IMR-90 (cell line): ENCODE measurements at regions of chr5 and their contacts with region 1.

Region 1: DNA sequence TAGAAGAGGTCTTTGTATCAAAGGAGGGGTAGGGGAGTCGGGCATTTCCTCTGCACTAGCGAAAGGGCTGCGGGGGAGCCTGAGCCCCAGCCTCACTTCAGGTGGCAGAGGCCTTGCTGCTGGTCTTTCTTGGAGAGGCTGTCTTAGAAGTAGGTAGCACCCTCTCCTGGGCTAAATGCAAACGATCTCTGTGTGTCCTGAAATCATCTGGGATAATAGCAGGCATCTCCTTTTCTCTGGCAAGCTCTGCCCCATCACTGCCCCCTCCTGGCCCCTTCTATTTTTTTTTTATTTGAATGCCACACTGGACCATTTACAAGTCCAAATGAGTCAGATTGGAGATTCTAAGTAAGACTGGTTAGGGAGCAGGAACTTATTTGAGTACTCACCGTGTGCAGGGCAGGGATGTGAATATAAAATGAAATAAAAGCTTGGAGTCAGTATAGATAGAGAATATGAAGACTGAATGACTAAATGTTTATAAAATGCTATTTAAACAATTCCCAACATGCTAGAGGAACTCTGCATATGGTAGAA is 137.1 kb downstream of the FGF1 start:
- DNase-seq: peak; percentile 97
- ATAC-seq: peak; percentile 92
- H3K4me3 ChIP-seq: no peak overlapping the region
- H3K27ac ChIP-seq: no peak overlapping the region
- H3K4me1 ChIP-seq: peaks cover 17% of the 10 kb centered on the region
- H3K27me3 ChIP-seq: no peaks in the 10 kb centered on the region
- CTCF ChIP-seq: peak; percentile 99
- POLR2A ChIP-seq: 0 out of 2 replicates have a peak, but pooled peaks have one; percentile 40
- RAD21 ChIP-seq: peak; percentile 99

Region 2: GRCh38 chr5:142012792-142013388 is 535.9 kb before region 1 on chr5 and contains the start of gene GNPDA1:
- CTCF ChIA-PET with region 1: no interaction called
- POLR2A ChIA-PET with region 1: no interaction called
- dilution Hi-C with region 1: no loop called
- in situ Hi-C with region 1: no loop called
- intact Hi-C with region 1: loop called (anchors 5 kb)
- DNase-seq: peak; percentile 72
- ATAC-seq: peak; percentile 88
- H3K4me3 ChIP-seq: peak within 1 kb of the TSS; percentile 69
- H3K27ac ChIP-seq: peak within 1 kb of the TSS; percentile 73
- H3K4me1 ChIP-seq: peaks cover 10% of the 10 kb centered on the region
- H3K27me3 ChIP-seq: no peaks in the 10 kb centered on the region
- CTCF ChIP-seq: 0 out of 2 replicates have a peak, but pooled peaks have one; percentile 15
- POLR2A ChIP-seq: peak; percentile 56
- RAD21 ChIP-seq: no peak
- total RNA-seq, gene GNPDA1: 50.5 and 60.6 TPM in 2 replicates

Region 3: DNA sequence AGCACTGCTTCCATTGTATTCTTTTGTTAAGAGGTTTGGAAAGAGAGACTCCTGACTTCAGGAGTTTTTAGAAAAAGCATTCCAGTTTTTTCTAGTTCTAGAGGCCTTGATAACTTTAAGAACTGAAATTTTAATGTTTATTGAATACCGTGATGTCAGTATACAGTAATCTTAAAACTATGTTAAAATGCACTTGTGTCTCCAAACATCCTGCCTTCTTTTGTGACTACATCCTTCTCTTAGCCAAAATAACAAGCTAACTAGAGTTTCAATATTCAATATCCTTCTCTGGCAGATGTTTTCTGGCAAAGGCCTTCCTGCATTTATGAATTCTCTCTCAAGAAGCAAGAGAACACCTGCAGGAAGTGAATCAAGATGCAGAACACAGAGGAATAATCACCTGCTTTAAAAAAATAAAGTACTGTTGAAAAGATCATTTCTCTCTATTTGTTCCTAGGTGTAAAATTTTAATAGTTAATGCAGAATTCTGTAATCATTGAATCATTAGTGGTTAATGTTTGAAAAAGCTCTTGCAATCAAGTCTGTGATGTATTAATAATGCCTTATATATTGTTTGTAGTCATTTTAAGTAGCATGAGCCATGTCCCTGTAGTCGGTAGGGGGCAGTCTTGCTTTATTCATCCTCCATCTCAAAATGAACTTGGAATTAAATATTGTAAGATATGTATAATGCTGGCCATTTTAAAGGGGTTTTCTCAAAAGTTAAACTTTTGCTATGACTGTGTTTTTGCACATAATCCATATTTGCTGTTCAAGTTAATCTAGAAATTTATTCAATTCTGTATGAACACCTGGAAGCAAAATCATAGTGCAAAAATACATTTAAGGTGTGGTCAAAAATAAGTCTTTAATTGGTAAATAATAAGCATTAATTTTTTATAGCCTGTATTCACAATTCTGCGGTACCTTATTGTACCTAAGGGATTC is 397.1 kb before region 1 on chr5:
- CTCF ChIA-PET with region 1: interaction called, 11 read pairs
- POLR2A ChIA-PET with region 1: no interaction called
- dilution Hi-C with region 1: loop called (anchors 25 kb)
- in situ Hi-C with region 1: loop called (anchors 5 kb)
- intact Hi-C with region 1: loop called (anchors 1 kb)
- DNase-seq: peak; percentile 89
- ATAC-seq: peak; percentile 93
- H3K4me3 ChIP-seq: no peak overlapping the region
- H3K27ac ChIP-seq: peak overlapping the region; percentile 79
- H3K4me1 ChIP-seq: peaks cover 5% of the 10 kb centered on the region
- H3K27me3 ChIP-seq: no peaks in the 10 kb centered on the region
- CTCF ChIP-seq: peak; percentile 97
- POLR2A ChIP-seq: no peak
- RAD21 ChIP-seq: peak; percentile 95

Region 4: GRCh38 chr5:142215915-142216681 is 332.7 kb before region 1 on chr5:
- CTCF ChIA-PET with region 1: no interaction called
- POLR2A ChIA-PET with region 1: no interaction called
- dilution Hi-C with region 1: no loop called
- in situ Hi-C with region 1: no loop called
- intact Hi-C with region 1: loop called (anchors 5 kb)
- DNase-seq: peak; percentile 98
- ATAC-seq: peak; percentile 97
- H3K4me3 ChIP-seq: no peak overlapping the region
- H3K27ac ChIP-seq: peak overlapping the region; percentile 50
- H3K4me1 ChIP-seq: peaks cover 7% of the 10 kb centered on the region; the same call in 1 of the 2 replicates
- H3K27me3 ChIP-seq: peaks cover 1% of the 10 kb centered on the region; the same call in 1 of the 2 replicates
- CTCF ChIP-seq: no peak
- POLR2A ChIP-seq: no peak
- RAD21 ChIP-seq: no peak; the same call in 1 of the 2 replicates

Region 5: DNA sequence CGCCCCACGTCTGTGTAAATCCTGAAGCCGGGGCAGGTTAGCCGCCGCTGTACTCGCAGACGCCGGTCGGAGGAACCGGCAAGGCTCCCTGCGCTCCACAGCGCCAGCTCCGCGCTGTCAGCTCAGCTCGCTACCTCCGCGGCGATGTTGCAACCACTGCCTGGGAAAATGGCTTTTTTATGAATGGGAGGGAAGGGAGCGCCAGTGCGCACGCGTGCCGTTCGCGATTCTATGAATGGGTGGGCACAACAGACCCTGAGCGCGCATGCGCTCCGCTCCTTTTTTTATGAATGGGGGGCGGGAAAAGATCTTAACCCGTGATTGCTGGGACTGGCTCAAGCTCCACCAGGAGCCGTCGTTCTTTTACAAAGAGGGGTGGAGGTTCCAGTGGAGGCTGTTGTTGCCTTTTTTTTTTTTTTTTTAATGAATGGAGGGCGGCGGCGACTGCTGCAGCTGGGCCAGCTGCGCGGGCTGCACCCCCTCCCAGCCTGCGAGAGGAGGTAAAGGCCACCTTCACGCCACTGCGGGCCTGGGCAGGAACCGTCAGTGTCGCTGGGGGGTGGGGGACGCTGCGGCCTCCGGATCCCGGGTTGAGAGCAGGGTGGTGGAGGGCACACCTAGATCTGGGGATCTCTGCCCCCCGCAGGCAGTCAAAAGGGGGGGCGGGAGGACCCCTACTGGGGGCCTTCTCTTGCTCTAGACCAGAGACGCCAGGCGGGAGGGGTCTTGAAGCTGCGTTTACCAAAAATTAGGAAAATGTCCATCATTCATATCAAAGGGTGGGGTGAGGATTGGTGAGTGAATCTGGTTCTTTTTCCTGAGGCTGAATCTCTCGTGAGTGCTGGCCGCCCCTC is 223.7 kb before region 1 on chr5 and contains the start of gene SPRY4:
- CTCF ChIA-PET with region 1: interaction called, 15 read pairs
- POLR2A ChIA-PET with region 1: no interaction called
- dilution Hi-C with region 1: no loop called
- in situ Hi-C with region 1: loop called (anchors 5 kb)
- intact Hi-C with region 1: loop called (anchors 1 kb)
- DNase-seq: peak; percentile 98
- ATAC-seq: peak; percentile 40
- H3K4me3 ChIP-seq: peak within 1 kb of the TSS; percentile 68
- H3K27ac ChIP-seq: peak within 1 kb of the TSS; percentile 100
- H3K4me1 ChIP-seq: peaks cover 31% of the 10 kb centered on the region
- H3K27me3 ChIP-seq: no peaks in the 10 kb centered on the region
- CTCF ChIP-seq: no peak; the same call in 1 of the 2 replicates
- POLR2A ChIP-seq: peak; percentile 98
- RAD21 ChIP-seq: peak; percentile 30; the same call in 1 of the 2 replicates
- total RNA-seq, gene SPRY4: 8.4 and 10.3 TPM in 2 replicates

Region 6: GRCh38 chr5:142446131-142446959 is 102.5 kb before region 1 on chr5:
- CTCF ChIA-PET with region 1: no interaction called
- POLR2A ChIA-PET with region 1: no interaction called
- dilution Hi-C with region 1: no loop called
- in situ Hi-C with region 1: no loop called
- intact Hi-C with region 1: loop called (anchors 10 kb)
- DNase-seq: peak; percentile 84
- ATAC-seq: peak; percentile 82
- H3K4me3 ChIP-seq: no peak overlapping the region
- H3K27ac ChIP-seq: peak overlapping the region; percentile 98
- H3K4me1 ChIP-seq: peaks cover 16% of the 10 kb centered on the region
- H3K27me3 ChIP-seq: no peaks in the 10 kb centered on the region
- CTCF ChIP-seq: no peak
- POLR2A ChIP-seq: no peak
- RAD21 ChIP-seq: no peak

Region 7: GRCh38 chr5:142845402-142845921 is 296.7 kb after region 1 on chr5:
- CTCF ChIA-PET with region 1: no interaction called
- POLR2A ChIA-PET with region 1: no interaction called
- dilution Hi-C with region 1: no loop called
- in situ Hi-C with region 1: no loop called
- intact Hi-C with region 1: no loop called
- DNase-seq: no peak
- ATAC-seq: no peak
- H3K4me3 ChIP-seq: no peak overlapping the region
- H3K27ac ChIP-seq: no peak overlapping the region
- H3K4me1 ChIP-seq: peaks cover 4% of the 10 kb centered on the region; the same call in 1 of the 2 replicates
- H3K27me3 ChIP-seq: peaks cover 15% of the 10 kb centered on the region
- CTCF ChIP-seq: no peak
- POLR2A ChIP-seq: no peak
- RAD21 ChIP-seq: no peak